ENCODE measurements at regions of chr2 and their contacts with region 1.

Region 1: GRCh38 chr2:237421542-237422116 is 7.7 kb upstream of the COL6A3 start:
- DNase-seq: peak; percentile 79 to 89
- H3K4me3 ChIP-seq: peak overlapping the region; percentile 15 to 33
- H3K27ac ChIP-seq: peak overlapping the region; percentile 47 to 58
- H3K4me1 ChIP-seq: peaks cover 0 to 12% (median 7%) of the 10 kb centered on the region in 4 donors
- H3K27me3 ChIP-seq: no peaks in the 10 kb centered on the region
- CTCF ChIP-seq: peak; percentile 83 to 90

Region 2: GRCh38 chr2:237165405-237166276 is 256.0 kb before region 1 on chr2:
- intact Hi-C with region 1: loop called (anchors 5 kb)
- DNase-seq: no peak
- H3K4me3 ChIP-seq: no peak overlapping the region
- H3K27ac ChIP-seq: no peak overlapping the region
- H3K4me1 ChIP-seq: no peaks in the 10 kb centered on the region
- H3K27me3 ChIP-seq: no peaks in the 10 kb centered on the region
- CTCF ChIP-seq: peak in 1 of 2 experiments; percentile 27

Region 3: GRCh38 chr2:237315170-237315828 is 106.3 kb before region 1 on chr2:
- intact Hi-C with region 1: no loop called
- DNase-seq: peak; percentile 90 to 97
- H3K4me3 ChIP-seq: no peak overlapping the region
- H3K27ac ChIP-seq: peak overlapping the region; percentile 94 to 98
- H3K4me1 ChIP-seq: peaks cover 4 to 70% (median 41%) of the 10 kb centered on the region in 4 donors
- H3K27me3 ChIP-seq: no peaks in the 10 kb centered on the region
- CTCF ChIP-seq: peak; percentile 63 to 65

Region 4: GRCh38 chr2:237456200-237456843 is 34.7 kb after region 1 on chr2:
- intact Hi-C with region 1: loop called (anchors 5 kb)
- DNase-seq: peak; percentile 89 to 95
- H3K4me3 ChIP-seq: no peak overlapping the region
- H3K27ac ChIP-seq: peak overlapping the region; percentile 68 to 84
- H3K4me1 ChIP-seq: peaks cover 0 to 37% (median 20%) of the 10 kb centered on the region in 4 donors
- H3K27me3 ChIP-seq: no peaks in the 10 kb centered on the region
- CTCF ChIP-seq: peak in 1 of 2 experiments; percentile 32

Measured in tibial artery (tissue), 4 donors.